GM10248 (cell line): ENCODE measurements at regions of chr10 and their contacts with region 1.

Region 1: GRCh38 chr10:96339957-96340904 is 18.6 kb downstream of the OPALIN start:
- DNase-seq: peak; percentile 60
- CTCF ChIP-seq: peak; percentile 94

Region 2: DNA sequence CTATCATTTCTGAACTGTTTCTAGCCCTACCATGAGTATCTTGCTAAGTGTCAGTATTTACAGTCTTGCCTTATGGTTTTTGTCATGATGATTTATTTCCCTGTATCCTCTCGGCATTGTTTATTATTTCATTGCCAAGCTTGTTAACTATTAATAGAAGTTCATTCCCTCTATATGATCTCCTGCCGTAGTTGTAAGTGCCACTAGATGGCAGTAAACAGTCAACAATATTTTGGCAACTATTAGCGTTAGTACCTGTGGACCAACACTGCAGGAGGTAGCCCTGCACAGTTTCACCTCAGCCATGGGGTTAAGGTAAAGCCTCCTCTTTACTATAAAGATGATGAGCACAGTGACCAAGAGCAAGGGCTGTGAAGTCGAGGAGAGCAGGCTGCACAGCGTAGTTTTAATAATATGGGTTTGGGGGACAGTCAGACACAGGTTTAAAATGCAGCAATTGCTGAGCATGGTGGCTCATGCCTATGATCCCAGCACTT is 323.0 kb before region 1 on chr10:
- CTCF ChIA-PET with region 1: interaction called, 150 read pairs
- POLR2A ChIA-PET with region 1: no interaction called
- DNase-seq: peak; percentile 67
- CTCF ChIP-seq: peak; percentile 78

Region 3: DNA sequence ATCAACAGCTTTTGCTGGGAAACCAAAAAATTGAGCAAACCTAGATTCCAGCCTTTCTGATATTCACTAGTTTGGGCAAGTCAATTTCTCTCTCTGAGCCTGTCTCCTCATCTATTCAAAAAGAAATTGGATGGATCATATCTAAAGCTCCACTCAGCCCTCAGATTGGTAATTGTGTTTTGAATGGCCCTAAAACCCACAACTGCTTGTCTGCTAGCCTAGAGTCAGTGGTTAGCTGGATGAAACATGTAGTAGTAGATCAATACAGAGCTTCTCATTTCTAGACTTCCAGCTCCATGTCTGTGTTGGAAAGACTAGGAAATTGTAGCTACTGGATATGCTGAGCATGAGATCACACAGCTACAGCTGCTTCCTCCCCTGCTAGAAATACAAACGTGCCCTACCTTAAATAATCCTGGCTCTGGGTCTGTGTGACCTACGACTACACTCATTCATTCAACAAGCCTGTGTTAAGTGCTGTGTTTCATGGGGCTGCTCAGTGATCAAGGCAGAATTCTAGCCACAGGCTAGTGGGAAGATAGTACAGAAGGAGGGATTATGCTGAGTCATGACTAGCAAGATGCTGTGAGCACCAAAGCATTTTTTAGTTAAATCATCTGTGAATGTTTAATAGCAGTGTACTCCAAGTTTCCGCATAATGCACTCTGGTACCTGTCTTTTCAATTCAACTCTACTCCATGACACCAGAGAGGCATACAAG is 20.3 kb before region 1 on chr10:
- CTCF ChIA-PET with region 1: interaction called, 11 read pairs
- POLR2A ChIA-PET with region 1: no interaction called
- DNase-seq: no peak
- CTCF ChIP-seq: no peak

Region 4: GRCh38 chr10:96327462-96327861 is 12.8 kb before region 1 on chr10:
- CTCF ChIA-PET with region 1: interaction called, 13 read pairs
- POLR2A ChIA-PET with region 1: no interaction called
- DNase-seq: no peak
- CTCF ChIP-seq: no peak

Region 5: DNA sequence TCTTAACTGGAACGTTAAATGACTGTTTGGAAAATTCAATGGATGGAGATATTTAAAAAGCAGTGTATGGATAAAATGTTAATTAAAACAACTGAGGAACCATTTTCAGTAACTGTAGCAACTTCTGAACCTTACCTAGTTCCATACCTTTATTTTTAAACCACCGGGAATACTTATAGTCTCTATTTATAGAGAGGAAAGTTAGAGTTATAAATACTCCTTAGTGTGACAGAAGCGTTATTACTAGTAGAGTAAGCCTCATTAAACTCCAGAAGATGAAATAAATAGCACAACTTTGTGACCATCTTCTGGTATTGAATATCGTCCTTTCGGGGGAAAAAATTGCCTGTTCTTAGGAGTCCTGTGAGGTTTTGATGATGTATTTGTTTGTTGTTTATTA is 606.8 kb after region 1 on chr10:
- CTCF ChIA-PET with region 1: no interaction called
- POLR2A ChIA-PET with region 1: no interaction called
- DNase-seq: no peak
- CTCF ChIP-seq: no peak